ENCODE measurements at regions of chr11 and their contacts with region 1.

Region 1: GRCh38 chr11:43680521-43681400 is at the start of gene HSD17B12:
- DNase-seq: peak; percentile 99
- H3K4me3 ChIP-seq: peak within 1 kb of the TSS; percentile 90
- H3K27ac ChIP-seq: peak within 1 kb of the TSS; percentile 84
- H3K4me1 ChIP-seq: peaks cover 26% of the 10 kb centered on the region
- H3K27me3 ChIP-seq: no peaks in the 10 kb centered on the region
- CTCF ChIP-seq: no peak
- total RNA-seq, gene HSD17B12: 83.3 and 112 TPM in 2 replicates

Region 2: GRCh38 chr11:43311791-43312607 is 368.8 kb before region 1 on chr11 and contains the start of gene API5:
- CTCF ChIA-PET with region 1: no interaction called
- POLR2A ChIA-PET with region 1: no interaction called
- intact Hi-C with region 1: loop called (anchors 2 kb)
- DNase-seq: peak; percentile 90 to 93
- H3K4me3 ChIP-seq: peak within 1 kb of the TSS; percentile 96
- H3K27ac ChIP-seq: peak within 1 kb of the TSS; percentile 63
- H3K4me1 ChIP-seq: peaks cover 22% of the 10 kb centered on the region
- H3K27me3 ChIP-seq: peaks cover 7% of the 10 kb centered on the region; the same call in 1 of the 2 replicates
- CTCF ChIP-seq: peak; percentile 83
- total RNA-seq, gene API5: 90.0 and 115 TPM in 2 replicates

Region 3: GRCh38 chr11:43738590-43739409 is 58.0 kb after region 1 on chr11:
- CTCF ChIA-PET with region 1: no interaction called
- POLR2A ChIA-PET with region 1: no interaction called
- intact Hi-C with region 1: loop called (anchors 1 kb)
- DNase-seq: peak; percentile 73 to 96
- H3K4me3 ChIP-seq: peak overlapping the region; percentile 32; the same call in 1 of the 2 replicates
- H3K27ac ChIP-seq: peak overlapping the region; percentile 73
- H3K4me1 ChIP-seq: peaks cover 44% of the 10 kb centered on the region
- H3K27me3 ChIP-seq: no peaks in the 10 kb centered on the region
- CTCF ChIP-seq: no peak

Region 4: GRCh38 chr11:43830928-43831440 is 150.2 kb after region 1 on chr11:
- CTCF ChIA-PET with region 1: no interaction called
- POLR2A ChIA-PET with region 1: interaction called, 3 read pairs
- intact Hi-C with region 1: loop called (anchors 1 kb)
- DNase-seq: peak; percentile 75 to 99
- H3K4me3 ChIP-seq: peak overlapping the region; percentile 27; the same call in 1 of the 2 replicates
- H3K27ac ChIP-seq: peak overlapping the region; percentile 52
- H3K4me1 ChIP-seq: peaks cover 21% of the 10 kb centered on the region
- H3K27me3 ChIP-seq: no peaks in the 10 kb centered on the region
- CTCF ChIP-seq: no peak

Measured in PC-9 (cell line).